Naive thymus-derived CD4-positive, alpha-beta T cell (primary cell): ENCODE measurements at regions of chr22 and their contacts with region 1.

Region 1: GRCh38 chr22:40107851-40108378 is 69.8 kb upstream of the TNRC6B start:
- DNase-seq: peak in 2 of 9 donors; percentile 19 to 32
- ATAC-seq: peak; percentile 65
- H3K4me3 ChIP-seq: peak overlapping the region; percentile 16
- H3K4me3 Mint-ChIP-seq: peak overlapping the region; percentile 65 to 91 (median 85)
- H3K27ac ChIP-seq: peak overlapping the region; percentile 63
- H3K27ac Mint-ChIP-seq: peak overlapping the region; percentile 36 to 94 (median 83)
- H3K4me1 ChIP-seq: peaks cover 34 to 45% of the 10 kb centered on the region in 2 donors
- H3K4me1 Mint-ChIP-seq: peaks cover 56 to 95% (median 91%) of the 10 kb centered on the region in 7 donors
- H3K27me3 ChIP-seq: no peaks in the 10 kb centered on the region
- H3K27me3 Mint-ChIP-seq: no peaks in the 10 kb centered on the region

Region 2: DNA sequence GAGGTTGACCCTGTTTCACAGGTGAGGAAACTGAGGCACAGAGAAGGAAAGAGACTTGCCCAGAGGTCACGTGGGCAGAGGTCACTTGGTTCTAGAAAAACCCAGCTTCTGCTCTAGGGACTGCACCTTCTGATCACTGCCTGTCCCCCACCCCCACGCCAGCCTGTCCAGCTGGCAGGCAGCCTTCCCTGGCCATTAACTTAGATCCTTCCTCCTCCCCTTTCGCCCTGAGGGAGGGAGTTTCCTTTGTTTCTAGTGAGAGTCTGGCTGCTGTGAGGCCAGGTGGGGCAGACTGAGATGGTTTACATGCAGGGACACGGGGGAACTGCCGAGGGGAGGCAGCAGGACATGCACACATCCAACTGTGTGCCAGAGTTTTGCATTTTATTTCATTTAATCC is 110.0 kb before region 1 on chr22:
- CTCF ChIA-PET with region 1: no interaction called
- POLR2A ChIA-PET with region 1: no interaction called
- intact Hi-C with region 1: no loop called
- DNase-seq: no peak
- ATAC-seq: no peak
- H3K4me3 ChIP-seq: no peak overlapping the region
- H3K4me3 Mint-ChIP-seq: no peak overlapping the region
- H3K27ac ChIP-seq: no peak overlapping the region
- H3K27ac Mint-ChIP-seq: peak overlapping the region in 1 of 9 donors; percentile 8
- H3K4me1 ChIP-seq: peaks cover 0 to 6% of the 10 kb centered on the region in 2 donors
- H3K4me1 Mint-ChIP-seq: peaks cover 0 to 15% (median 9%) of the 10 kb centered on the region in 7 donors
- H3K27me3 ChIP-seq: peaks cover 0 to 6% of the 10 kb centered on the region in 2 donors
- H3K27me3 Mint-ChIP-seq: peaks cover 0 to 48% (median 17%) of the 10 kb centered on the region in 5 donors

Region 3: DNA sequence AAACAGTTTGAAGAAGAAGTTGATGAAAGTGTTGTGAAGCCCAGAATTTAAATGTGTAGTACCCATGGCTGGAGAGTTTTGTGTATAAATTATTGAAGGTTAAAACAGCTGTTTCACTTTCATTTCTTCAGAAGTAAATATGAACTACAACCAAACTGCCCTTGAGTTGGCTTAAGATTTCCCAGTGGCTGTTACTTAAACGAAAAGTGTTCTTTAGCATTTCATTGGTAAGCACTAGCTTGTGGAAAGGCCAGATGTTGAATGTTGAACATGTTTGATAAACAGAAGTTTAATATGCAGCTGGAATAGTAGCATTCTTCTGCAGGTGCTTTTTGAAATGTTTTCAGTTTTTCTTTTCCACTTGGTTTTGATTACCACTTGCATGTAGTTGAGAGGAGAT is 13.4 kb before region 1 on chr22:
- CTCF ChIA-PET with region 1: interaction called, 6 read pairs
- POLR2A ChIA-PET with region 1: no interaction called
- intact Hi-C with region 1: loop called (anchors 1 kb)
- DNase-seq: peak in 1 of 9 donors; percentile 27
- ATAC-seq: peak; percentile 44
- H3K4me3 ChIP-seq: no peak overlapping the region
- H3K4me3 Mint-ChIP-seq: peak overlapping the region; percentile 0 to 79 (median 66)
- H3K27ac ChIP-seq: no peak overlapping the region
- H3K27ac Mint-ChIP-seq: peak overlapping the region in 8 of 9 donors; percentile 6 to 87 (median 54)
- H3K4me1 ChIP-seq: peaks cover 9 to 61% of the 10 kb centered on the region in 2 donors
- H3K4me1 Mint-ChIP-seq: peaks cover 46 to 90% (median 76%) of the 10 kb centered on the region in 7 donors
- H3K27me3 ChIP-seq: no peaks in the 10 kb centered on the region
- H3K27me3 Mint-ChIP-seq: no peaks in the 10 kb centered on the region

Region 4: DNA sequence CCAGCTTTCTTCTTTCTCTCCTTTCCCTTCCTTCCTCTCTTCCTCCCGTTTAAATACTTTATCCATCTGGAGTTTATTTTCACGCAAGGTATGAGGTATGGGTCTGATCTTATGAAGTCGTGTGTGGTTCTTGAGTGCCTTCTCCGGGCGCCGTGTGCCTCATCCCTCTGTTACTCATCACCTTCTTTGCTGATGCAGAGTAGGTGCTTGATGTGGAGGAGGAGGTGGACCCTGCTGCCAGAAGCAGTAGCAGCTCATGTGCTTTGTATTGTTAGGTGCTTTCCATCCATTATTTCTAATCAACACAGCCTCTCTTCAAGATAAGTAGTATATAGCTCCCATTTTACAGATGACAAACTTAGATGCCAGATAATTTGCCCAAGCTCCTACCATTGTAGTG is 116.8 kb after region 1 on chr22:
- CTCF ChIA-PET with region 1: no interaction called
- POLR2A ChIA-PET with region 1: no interaction called
- intact Hi-C with region 1: no loop called
- DNase-seq: peak in 2 of 9 donors; percentile 40 to 63
- ATAC-seq: peak; percentile 89
- H3K4me3 ChIP-seq: no peak overlapping the region
- H3K4me3 Mint-ChIP-seq: peak overlapping the region; percentile 23 to 79 (median 62)
- H3K27ac ChIP-seq: no peak overlapping the region
- H3K27ac Mint-ChIP-seq: peak overlapping the region; percentile 24 to 92 (median 69)
- H3K4me1 ChIP-seq: peaks cover 6 to 41% of the 10 kb centered on the region in 2 donors
- H3K4me1 Mint-ChIP-seq: peaks cover 47 to 80% (median 68%) of the 10 kb centered on the region in 7 donors
- H3K27me3 ChIP-seq: no peaks in the 10 kb centered on the region
- H3K27me3 Mint-ChIP-seq: no peaks in the 10 kb centered on the region